Heart right ventricle (tissue), 16 donors: ENCODE measurements at regions of chr14 and their contacts with region 1.

Region 1: DNA sequence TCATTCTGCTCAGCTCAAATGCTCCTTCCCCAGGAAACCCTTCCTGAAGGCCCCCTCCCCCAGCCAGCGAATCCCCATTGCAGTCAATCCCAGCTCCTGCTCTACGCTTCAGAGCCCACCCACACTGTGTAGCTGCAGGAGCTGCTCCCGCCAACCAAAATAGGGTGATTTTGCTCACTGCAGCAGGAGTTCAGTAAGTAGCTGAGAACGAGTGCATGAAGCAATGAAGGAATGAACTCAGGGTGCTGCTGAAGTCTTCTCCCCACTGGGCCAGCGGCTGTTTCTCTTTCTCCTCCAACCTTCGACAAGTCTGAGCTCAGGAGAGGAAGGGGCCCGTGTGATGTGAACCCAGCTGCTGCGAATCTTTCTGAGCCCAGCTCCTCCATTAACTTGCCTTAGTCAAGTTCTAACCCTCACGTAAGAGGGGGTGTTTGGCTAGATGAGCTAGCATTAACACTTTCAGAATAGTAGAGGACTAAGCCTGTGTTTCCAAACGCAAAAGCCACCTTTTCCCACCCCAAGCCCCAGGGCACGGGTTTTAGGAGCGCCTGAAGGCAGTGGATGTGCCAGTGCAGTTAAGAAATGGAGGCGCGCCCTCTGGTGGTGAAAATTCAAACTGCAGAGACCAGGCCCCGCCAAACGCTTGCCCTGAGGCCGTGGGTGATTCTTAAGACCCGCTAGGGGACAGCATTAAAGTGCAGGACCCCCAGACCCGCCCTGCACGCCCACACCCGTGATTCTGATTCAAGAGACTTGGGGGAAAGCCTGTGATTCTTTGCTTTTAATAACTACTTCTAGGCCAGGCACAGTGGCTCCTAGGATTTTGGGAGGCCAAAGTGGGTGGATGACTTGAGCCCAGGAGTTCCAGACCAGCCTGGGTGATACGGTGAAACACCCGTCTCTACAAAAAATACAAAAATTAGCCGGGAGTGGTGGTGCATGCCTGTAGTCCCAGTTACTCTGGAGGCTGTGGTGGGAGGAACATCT is 11.9 kb upstream of the SERPINA4 start:
- DNase-seq: peak; percentile 45 to 62
- ATAC-seq: peak; percentile 43 to 80 (median 70)
- H3K4me3 ChIP-seq: no peak overlapping the region
- H3K27ac ChIP-seq: no peak overlapping the region
- H3K4me1 ChIP-seq: peaks cover 0 to 4% (median 0%) of the 10 kb centered on the region in 9 donors
- H3K27me3 ChIP-seq: peaks cover 0 to 38% (median 24%) of the 10 kb centered on the region in 7 donors
- CTCF ChIP-seq: peak; percentile 80 to 96 (median 86)

Region 2: GRCh38 chr14:94439453-94440057 is 109.7 kb before region 1 on chr14:
- intact Hi-C with region 1: loop called in 1 of 10 experiments (anchors 10 kb)
- DNase-seq: no peak
- ATAC-seq: no peak
- H3K4me3 ChIP-seq: no peak overlapping the region
- H3K27ac ChIP-seq: no peak overlapping the region
- H3K4me1 ChIP-seq: no peaks in the 10 kb centered on the region
- H3K27me3 ChIP-seq: peaks cover 0 to 29% (median 24%) of the 10 kb centered on the region in 7 donors
- CTCF ChIP-seq: no peak

Region 3: GRCh38 chr14:94612174-94612573 is 62.9 kb after region 1 on chr14 and contains the start of gene SERPINA3:
- intact Hi-C with region 1: no loop called
- DNase-seq: no peak
- ATAC-seq: peak in 4 of 8 donors; percentile 54 to 74 (median 68)
- H3K4me3 ChIP-seq: peak within 1 kb of the TSS in 2 of 10 donors; percentile 14 to 26
- H3K27ac ChIP-seq: peak within 1 kb of the TSS in 6 of 10 donors; percentile 2 to 63 (median 30)
- H3K4me1 ChIP-seq: peaks cover 0 to 7% (median 0%) of the 10 kb centered on the region in 9 donors
- H3K27me3 ChIP-seq: no peaks in the 10 kb centered on the region
- CTCF ChIP-seq: no peak
- total RNA-seq, gene SERPINA3: 1.0 to 163 (median 6.3) TPM